CD4-positive, alpha-beta T cell (primary cell): ENCODE measurements at regions of chr3 and their contacts with region 1.

Region 1: GRCh38 chr3:129439817-129440617 is at the starts of genes IFT122 and MBD4:
- DNase-seq: peak; percentile 97 to 100 (median 98)
- ATAC-seq: peak; percentile 81
- H3K4me3 ChIP-seq: peak within 1 kb of the TSS; percentile 91
- H3K4me3 Mint-ChIP-seq: peak within 1 kb of the TSS; percentile 91
- H3K27ac ChIP-seq: peak within 1 kb of the TSS; percentile 83 to 87
- H3K27ac Mint-ChIP-seq: peak within 1 kb of the TSS; percentile 93
- H3K4me1 ChIP-seq: peaks cover 30% of the 10 kb centered on the region
- H3K4me1 Mint-ChIP-seq: peaks cover 86% of the 10 kb centered on the region
- H3K27me3 ChIP-seq: no peaks in the 10 kb centered on the region
- H3K27me3 Mint-ChIP-seq: no peaks in the 10 kb centered on the region
- CTCF ChIP-seq: no peak
- total RNA-seq, gene IFT122: 22.7 to 26.7 TPM
- total RNA-seq, gene MBD4: 62.0 to 63.9 TPM

Region 2: DNA sequence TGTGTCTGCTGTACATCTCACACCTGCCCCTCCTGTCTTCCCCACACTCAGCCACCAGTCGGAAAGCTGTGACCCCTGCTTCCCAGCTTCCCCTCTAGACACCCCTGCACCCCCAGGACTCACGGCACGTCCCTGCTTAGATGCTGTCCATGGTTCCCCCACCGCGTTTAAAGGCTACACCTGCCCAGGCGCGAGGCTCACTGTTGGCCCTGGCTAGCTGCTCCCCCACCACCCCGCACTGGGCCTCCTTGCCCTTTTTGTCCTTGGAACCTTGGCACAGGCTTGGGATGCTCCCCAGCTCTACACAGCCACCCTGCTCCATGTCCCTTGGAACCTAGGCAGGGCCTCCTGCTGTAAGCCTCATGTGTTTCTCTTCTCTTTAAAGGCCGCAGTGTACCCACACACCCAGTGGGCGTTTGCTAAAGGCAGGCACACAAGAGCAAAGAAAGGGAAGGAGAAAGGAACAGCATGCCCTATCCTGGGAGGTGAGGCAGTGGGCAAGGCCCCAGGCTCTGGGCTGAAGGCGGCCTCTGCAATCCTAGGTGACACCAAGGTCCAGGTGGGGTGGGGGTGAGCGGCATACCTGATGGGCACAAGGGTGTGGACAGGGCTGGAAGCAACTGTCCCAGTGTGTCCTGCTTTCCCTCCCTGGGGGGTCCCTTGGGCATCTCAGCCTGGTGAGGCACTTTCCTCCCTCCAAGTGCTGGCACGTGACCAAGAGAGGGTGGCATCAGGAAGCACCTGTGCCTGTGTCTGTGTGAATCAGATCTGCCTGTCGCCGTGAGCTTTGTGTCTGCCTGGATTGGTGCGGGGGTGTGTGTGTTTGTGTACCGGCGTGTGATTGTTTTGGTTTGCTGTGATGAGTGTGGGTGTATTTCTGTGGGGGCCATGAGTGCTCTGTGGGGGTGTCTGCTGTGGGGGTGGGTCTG is 1903.9 kb before region 1 on chr3:
- CTCF ChIA-PET with region 1: no interaction called
- POLR2A ChIA-PET with region 1: no interaction called
- intact Hi-C with region 1: no loop called
- DNase-seq: no peak
- ATAC-seq: no peak
- H3K4me3 ChIP-seq: no peak overlapping the region
- H3K4me3 Mint-ChIP-seq: no peak overlapping the region
- H3K27ac ChIP-seq: no peak overlapping the region
- H3K27ac Mint-ChIP-seq: no peak overlapping the region
- H3K4me1 ChIP-seq: no peaks in the 10 kb centered on the region
- H3K4me1 Mint-ChIP-seq: peaks cover 5% of the 10 kb centered on the region
- H3K27me3 ChIP-seq: peaks cover 0 to 3% of the 10 kb centered on the region in 2 experiments
- H3K27me3 Mint-ChIP-seq: no peaks in the 10 kb centered on the region
- CTCF ChIP-seq: no peak

Region 3: GRCh38 chr3:129371041-129371826 is 68.8 kb before region 1 on chr3:
- CTCF ChIA-PET with region 1: no interaction called
- POLR2A ChIA-PET with region 1: no interaction called
- intact Hi-C with region 1: no loop called
- DNase-seq: no peak
- ATAC-seq: no peak
- H3K4me3 ChIP-seq: no peak overlapping the region
- H3K4me3 Mint-ChIP-seq: no peak overlapping the region
- H3K27ac ChIP-seq: no peak overlapping the region
- H3K27ac Mint-ChIP-seq: no peak overlapping the region
- H3K4me1 ChIP-seq: no peaks in the 10 kb centered on the region
- H3K4me1 Mint-ChIP-seq: no peaks in the 10 kb centered on the region
- H3K27me3 ChIP-seq: no peaks in the 10 kb centered on the region
- H3K27me3 Mint-ChIP-seq: no peaks in the 10 kb centered on the region
- CTCF ChIP-seq: no peak

Region 4: DNA sequence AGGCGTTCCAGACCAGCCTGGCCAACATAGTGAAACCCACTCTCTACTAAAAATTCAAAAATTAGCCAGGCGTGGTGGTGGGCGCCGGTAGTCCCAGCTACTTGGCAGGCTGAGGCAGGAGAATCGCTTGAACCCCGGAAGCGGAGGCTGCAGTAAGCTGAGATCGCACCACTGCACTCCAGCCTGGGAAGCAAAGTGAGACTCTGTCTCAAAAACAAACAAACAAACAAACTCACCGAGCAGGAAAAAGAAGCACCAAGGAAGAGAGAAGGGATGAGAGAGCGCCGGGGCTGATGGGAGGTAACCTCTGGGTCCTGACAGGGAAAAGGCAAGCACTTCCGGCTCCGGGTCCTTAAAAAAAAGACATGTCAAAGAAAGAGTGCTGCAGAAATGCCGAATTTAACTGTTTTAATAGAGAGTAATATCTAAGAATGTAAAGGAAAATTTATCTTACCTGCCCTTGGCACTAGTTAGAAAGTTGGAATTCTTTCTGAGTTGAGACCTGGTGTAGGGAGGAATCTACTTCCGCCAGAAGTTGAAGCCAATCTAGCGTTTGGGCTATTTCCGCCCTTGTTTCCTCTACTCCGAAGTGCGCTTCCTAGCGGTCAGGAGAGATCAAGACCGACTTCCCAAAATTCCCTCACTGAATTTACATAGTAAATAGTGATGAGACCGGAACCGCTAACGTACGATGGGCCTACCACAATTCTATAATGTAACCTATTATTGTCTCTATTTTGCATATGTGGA is 40.7 kb before region 1 on chr3:
- CTCF ChIA-PET with region 1: interaction called, 6 read pairs
- POLR2A ChIA-PET with region 1: interaction called, 17 read pairs
- intact Hi-C with region 1: loop called (anchors 2 to 5 kb)
- DNase-seq: peak; percentile 49 to 94 (median 61)
- ATAC-seq: peak; percentile 82
- H3K4me3 ChIP-seq: peak overlapping the region; percentile 82
- H3K4me3 Mint-ChIP-seq: peak overlapping the region; percentile 91
- H3K27ac ChIP-seq: peak overlapping the region; percentile 68 to 97
- H3K27ac Mint-ChIP-seq: peak overlapping the region; percentile 94
- H3K4me1 ChIP-seq: peaks cover 27% of the 10 kb centered on the region
- H3K4me1 Mint-ChIP-seq: peaks cover 38% of the 10 kb centered on the region
- H3K27me3 ChIP-seq: no peaks in the 10 kb centered on the region
- H3K27me3 Mint-ChIP-seq: no peaks in the 10 kb centered on the region
- CTCF ChIP-seq: peak; percentile 97

Region 5: GRCh38 chr3:129481766-129482332 is 41.8 kb after region 1 on chr3:
- CTCF ChIA-PET with region 1: no interaction called
- POLR2A ChIA-PET with region 1: interaction called, 18 read pairs
- intact Hi-C with region 1: loop called (anchors 1 to 5 kb)
- DNase-seq: peak; percentile 40 to 84 (median 56)
- ATAC-seq: peak; percentile 98
- H3K4me3 ChIP-seq: no peak overlapping the region
- H3K4me3 Mint-ChIP-seq: peak overlapping the region; percentile 11
- H3K27ac ChIP-seq: peak overlapping the region; percentile 60 to 80
- H3K27ac Mint-ChIP-seq: peak overlapping the region; percentile 86
- H3K4me1 ChIP-seq: peaks cover 15% of the 10 kb centered on the region
- H3K4me1 Mint-ChIP-seq: peaks cover 22% of the 10 kb centered on the region
- H3K27me3 ChIP-seq: no peaks in the 10 kb centered on the region
- H3K27me3 Mint-ChIP-seq: no peaks in the 10 kb centered on the region
- CTCF ChIP-seq: no peak

Region 6: GRCh38 chr3:129606636-129607390 is 166.8 kb after region 1 on chr3 and contains the start of gene PLXND1:
- CTCF ChIA-PET with region 1: interaction called, 4 read pairs
- POLR2A ChIA-PET with region 1: interaction called, 7 read pairs
- intact Hi-C with region 1: loop called in 1 of 2 experiments (anchors 5 kb)
- DNase-seq: peak in 11 of 14 experiments; percentile 10 to 79 (median 46)
- ATAC-seq: peak; percentile 53
- H3K4me3 ChIP-seq: peak within 1 kb of the TSS; percentile 61
- H3K4me3 Mint-ChIP-seq: peak within 1 kb of the TSS; percentile 95
- H3K27ac ChIP-seq: no peak within 1 kb of the TSS
- H3K27ac Mint-ChIP-seq: peak within 1 kb of the TSS; percentile 67
- H3K4me1 ChIP-seq: peaks cover 51% of the 10 kb centered on the region
- H3K4me1 Mint-ChIP-seq: peaks cover 33% of the 10 kb centered on the region
- H3K27me3 ChIP-seq: peaks cover 0 to 5% of the 10 kb centered on the region in 2 experiments
- H3K27me3 Mint-ChIP-seq: peaks cover 20% of the 10 kb centered on the region
- CTCF ChIP-seq: no peak
- total RNA-seq, gene PLXND1: 61.7 to 62.5 TPM

Region 7: DNA sequence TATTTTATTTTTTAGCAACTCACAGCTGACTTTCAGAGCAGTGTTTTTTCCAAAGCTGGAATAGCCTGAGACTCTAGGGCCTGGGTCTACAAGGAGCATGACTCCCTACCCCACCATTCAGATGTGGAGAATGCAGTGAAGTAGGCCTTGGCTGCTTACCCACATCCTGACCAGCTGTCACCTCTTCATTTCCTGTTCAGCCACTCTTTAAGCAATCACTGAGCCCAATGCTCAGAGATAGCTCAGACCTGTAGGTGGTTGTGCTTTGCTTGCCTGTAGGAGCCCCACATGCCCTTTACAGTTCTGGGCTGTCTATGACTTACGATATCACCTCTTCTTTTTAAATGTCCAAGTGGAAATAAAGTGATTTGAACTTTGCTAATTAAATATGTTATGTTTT is 1734.7 kb after region 1 on chr3:
- CTCF ChIA-PET with region 1: no interaction called
- POLR2A ChIA-PET with region 1: no interaction called
- intact Hi-C with region 1: no loop called
- DNase-seq: peak in 6 of 14 experiments; percentile 7 to 65 (median 12)
- ATAC-seq: no peak
- H3K4me3 ChIP-seq: no peak overlapping the region
- H3K4me3 Mint-ChIP-seq: no peak overlapping the region
- H3K27ac ChIP-seq: no peak overlapping the region
- H3K27ac Mint-ChIP-seq: peak overlapping the region; percentile 47
- H3K4me1 ChIP-seq: peaks cover 4% of the 10 kb centered on the region
- H3K4me1 Mint-ChIP-seq: peaks cover 15% of the 10 kb centered on the region
- H3K27me3 ChIP-seq: no peaks in the 10 kb centered on the region
- H3K27me3 Mint-ChIP-seq: no peaks in the 10 kb centered on the region
- CTCF ChIP-seq: no peak